Dorsolateral prefrontal cortex (tissue), 120 donors: ENCODE measurements at regions of chr1 and their contacts with region 1.

Region 1: GRCh38 chr1:77514921-77515776 is 167.3 kb downstream of the ZZZ3 start:
- DNase-seq: peak in 9 of 10 donors; percentile 53 to 84 (median 72)
- H3K4me3 ChIP-seq: peak overlapping the region in 31 of 59 donors; percentile 1 to 53 (median 23)
- H3K27ac ChIP-seq: peak overlapping the region; percentile 80 to 100 (median 97)
- H3K27me3 ChIP-seq: no peaks in the 10 kb centered on the region
- CTCF ChIP-seq: peak in 43 of 56 donors; percentile 4 to 65 (median 39)

Region 2: DNA sequence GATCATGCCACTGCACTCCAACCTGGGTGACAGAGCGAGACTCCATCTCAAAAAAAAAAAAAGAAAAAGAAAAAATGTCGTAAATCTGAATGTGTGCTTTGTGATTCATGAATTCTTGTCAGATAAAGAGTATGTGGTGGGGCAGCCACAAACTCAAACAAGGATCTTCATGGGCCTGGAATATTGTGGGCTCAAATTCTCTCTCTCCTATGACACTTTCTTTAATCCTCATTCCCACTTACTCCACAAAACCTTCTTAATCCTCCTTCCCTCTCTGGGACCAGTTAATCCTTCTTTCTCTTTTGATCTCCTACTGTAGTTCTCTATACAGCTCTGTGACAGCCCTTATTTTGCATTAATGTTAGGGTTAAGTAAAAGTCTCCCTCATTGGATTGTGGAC is 121.0 kb before region 1 on chr1:
- intact Hi-C with region 1: loop called (anchors 1 to 2 kb)
- DNase-seq: no peak
- H3K4me3 ChIP-seq: no peak overlapping the region
- H3K27ac ChIP-seq: peak overlapping the region; percentile 42 to 99 (median 93)
- H3K27me3 ChIP-seq: no peaks in the 10 kb centered on the region
- CTCF ChIP-seq: no peak

Region 3: GRCh38 chr1:77399250-77400086 is 115.7 kb before region 1 on chr1:
- intact Hi-C with region 1: loop called (anchors 1 to 2 kb)
- DNase-seq: peak in 4 of 10 donors; percentile 53 to 72 (median 62)
- H3K4me3 ChIP-seq: peak overlapping the region in 15 of 59 donors; percentile 3 to 31 (median 12)
- H3K27ac ChIP-seq: peak overlapping the region; percentile 81 to 99 (median 93)
- H3K27me3 ChIP-seq: no peaks in the 10 kb centered on the region
- CTCF ChIP-seq: peak in 1 of 56 donors; percentile 15

Region 4: GRCh38 chr1:77655431-77655974 is 140.4 kb after region 1 on chr1:
- intact Hi-C with region 1: no loop called
- DNase-seq: no peak
- H3K4me3 ChIP-seq: no peak overlapping the region
- H3K27ac ChIP-seq: peak overlapping the region in 23 of 59 donors; percentile 2 to 47 (median 21)
- H3K27me3 ChIP-seq: no peaks in the 10 kb centered on the region
- CTCF ChIP-seq: no peak